ENCODE measurements at regions of chr5 and their contacts with region 1.

Region 1: DNA sequence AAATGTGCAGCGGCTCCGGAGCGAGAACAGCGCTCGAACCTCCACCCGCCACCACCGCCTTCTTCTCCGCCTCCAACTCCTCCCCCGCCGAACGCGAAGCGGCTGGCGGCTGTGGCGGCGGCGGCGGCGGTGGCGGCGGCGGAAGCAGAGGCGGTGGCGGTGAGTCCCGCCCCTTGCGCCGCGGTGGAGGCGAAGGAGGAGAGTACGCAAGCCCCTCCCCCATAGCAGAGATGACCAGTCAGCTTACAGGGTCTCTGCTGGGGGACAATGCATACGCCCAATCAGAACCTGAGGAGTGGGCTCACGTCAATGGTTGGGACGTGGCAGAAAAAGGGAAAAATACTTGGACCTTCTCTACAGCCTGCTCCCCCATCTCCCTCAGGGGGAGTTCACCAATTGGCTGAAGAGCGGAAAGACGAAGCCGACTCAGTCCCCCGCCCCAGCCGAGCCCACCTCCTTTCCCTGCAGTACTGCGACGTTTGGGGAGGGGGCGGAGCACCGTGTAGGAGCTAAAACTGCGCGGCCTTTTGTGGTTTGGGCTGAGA is at the start of gene PJA2:
- DNase-seq: peak; percentile 93 to 100 (median 98)

Region 2: DNA sequence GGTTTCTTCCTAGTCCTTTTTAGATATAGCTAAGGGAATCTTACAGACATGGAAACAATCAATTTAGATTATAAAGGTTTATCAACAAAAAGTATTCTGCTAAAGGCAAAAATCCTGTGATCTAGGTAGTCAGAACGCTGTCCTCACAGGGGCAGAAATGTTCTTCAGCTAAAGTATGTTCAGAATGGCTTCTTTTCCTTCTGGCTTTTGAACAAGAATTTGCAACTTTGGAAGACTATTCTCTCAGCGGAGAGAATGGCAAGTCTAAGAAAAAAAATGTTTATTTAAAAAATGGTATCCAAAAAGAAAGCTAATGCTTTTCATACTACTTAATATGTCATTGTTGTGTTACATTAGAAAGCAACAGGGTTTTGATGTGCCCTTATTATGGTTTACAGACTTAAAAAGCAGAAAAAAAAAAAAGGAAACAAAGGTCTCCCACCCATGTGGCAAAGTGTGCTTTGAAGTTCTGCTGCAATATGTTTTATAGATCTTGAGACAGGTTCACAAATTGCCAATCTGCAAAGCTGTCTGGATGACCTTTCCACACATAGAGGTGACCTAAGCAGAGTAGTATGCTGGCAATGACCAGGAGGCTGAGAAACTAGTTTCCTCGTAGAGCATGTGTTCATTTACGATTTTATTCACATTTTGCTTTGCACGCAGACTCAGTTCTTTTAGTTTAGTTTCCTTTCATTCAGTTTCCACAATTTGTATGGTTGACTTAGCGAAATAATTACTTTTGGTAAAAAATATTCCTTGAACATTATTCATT is 45.0 kb after region 1 on chr5:
- intact Hi-C with region 1: loop called (anchors 5 kb)
- DNase-seq: no peak

Region 3: DNA sequence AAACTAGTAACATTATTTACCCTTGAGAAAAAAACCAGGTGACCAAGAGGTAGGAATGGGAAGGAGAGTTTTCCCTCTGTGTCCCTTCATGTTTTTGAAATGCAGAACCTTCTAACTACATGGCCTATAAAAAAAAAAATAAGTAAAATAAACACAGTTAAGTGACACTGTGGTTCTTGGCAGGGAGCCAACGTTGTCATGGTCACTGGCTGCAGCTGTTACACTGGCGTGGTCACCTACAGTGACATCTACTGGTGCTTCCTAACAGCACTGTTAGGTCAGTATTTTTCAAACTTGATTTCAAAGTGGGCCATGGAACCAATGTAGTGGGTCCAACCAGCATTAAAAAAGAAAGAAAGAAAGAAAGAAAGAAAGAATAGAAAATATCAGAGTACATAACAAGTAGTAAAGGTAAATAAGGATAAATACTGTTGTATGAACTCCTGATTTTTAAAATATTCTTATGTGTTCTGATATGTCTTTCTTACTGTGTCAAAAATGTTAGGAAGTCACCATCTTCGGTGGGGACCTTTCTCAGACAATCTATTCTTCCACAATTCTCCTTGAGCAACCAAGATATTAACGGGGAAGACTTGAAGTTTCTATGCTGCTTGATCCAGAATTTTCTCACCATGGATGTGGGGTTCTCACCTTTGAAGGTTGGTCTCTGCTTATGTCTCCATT is 59.0 kb after region 1 on chr5:
- intact Hi-C with region 1: loop called (anchors 5 kb)
- DNase-seq: peak; percentile 78 to 98 (median 91)

Region 4: GRCh38 chr5:109496109-109496508 is 86.2 kb after region 1 on chr5:
- intact Hi-C with region 1: no loop called
- DNase-seq: peak in 3 of 42 donors; percentile 13 to 46 (median 32)

Region 5: GRCh38 chr5:109553846-109554245 is 143.9 kb after region 1 on chr5:
- intact Hi-C with region 1: no loop called
- DNase-seq: no peak